WTC11 (cell line): ENCODE measurements at regions of chr17 and their contacts with region 1.

Region 1: GRCh38 chr17:81018044-81018802 is 16.7 kb upstream of the BAIAP2 start:
- DNase-seq: no peak
- ATAC-seq: no peak
- H3K4me3 Mint-ChIP-seq: no peak overlapping the region
- H3K27ac Mint-ChIP-seq: peak overlapping the region; percentile 48
- H3K4me1 Mint-ChIP-seq: peaks cover 15% of the 10 kb centered on the region
- H3K27me3 Mint-ChIP-seq: no peaks in the 10 kb centered on the region
- CTCF ChIP-seq: no peak

Region 2: DNA sequence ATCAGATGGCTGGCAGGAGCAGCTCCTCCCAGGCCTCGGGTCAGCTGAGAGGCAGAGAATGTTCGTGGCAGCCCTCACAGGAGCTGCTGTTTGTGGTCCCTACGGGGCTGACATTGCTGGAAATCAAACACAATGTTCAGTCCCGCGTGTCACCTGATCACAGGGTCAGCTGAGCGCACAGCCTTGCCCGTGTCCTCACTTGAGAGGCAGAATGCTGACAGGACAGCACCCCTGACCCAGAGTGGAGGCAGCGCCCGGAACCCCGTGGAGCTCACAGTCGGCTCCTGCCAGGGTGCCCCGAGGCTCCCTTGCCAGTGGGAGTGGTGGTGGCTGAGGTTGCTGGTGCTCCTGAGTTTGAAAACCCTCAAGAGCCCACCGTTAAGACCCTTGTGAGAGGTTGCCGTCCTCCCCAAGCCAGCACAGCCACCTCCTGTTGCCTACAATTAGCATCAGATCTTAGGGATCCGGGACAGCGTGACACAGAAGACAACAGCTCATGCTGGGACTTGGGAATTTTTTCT is 30.2 kb before region 1 on chr17:
- CTCF ChIA-PET with region 1: interaction called, 13 read pairs
- POLR2A ChIA-PET with region 1: interaction called, 4 read pairs
- DNase-seq: no peak
- ATAC-seq: no peak
- H3K4me3 Mint-ChIP-seq: no peak overlapping the region
- H3K27ac Mint-ChIP-seq: no peak overlapping the region
- H3K4me1 Mint-ChIP-seq: peaks cover 5% of the 10 kb centered on the region
- H3K27me3 Mint-ChIP-seq: peaks cover 10% of the 10 kb centered on the region
- CTCF ChIP-seq: no peak

Region 3: DNA sequence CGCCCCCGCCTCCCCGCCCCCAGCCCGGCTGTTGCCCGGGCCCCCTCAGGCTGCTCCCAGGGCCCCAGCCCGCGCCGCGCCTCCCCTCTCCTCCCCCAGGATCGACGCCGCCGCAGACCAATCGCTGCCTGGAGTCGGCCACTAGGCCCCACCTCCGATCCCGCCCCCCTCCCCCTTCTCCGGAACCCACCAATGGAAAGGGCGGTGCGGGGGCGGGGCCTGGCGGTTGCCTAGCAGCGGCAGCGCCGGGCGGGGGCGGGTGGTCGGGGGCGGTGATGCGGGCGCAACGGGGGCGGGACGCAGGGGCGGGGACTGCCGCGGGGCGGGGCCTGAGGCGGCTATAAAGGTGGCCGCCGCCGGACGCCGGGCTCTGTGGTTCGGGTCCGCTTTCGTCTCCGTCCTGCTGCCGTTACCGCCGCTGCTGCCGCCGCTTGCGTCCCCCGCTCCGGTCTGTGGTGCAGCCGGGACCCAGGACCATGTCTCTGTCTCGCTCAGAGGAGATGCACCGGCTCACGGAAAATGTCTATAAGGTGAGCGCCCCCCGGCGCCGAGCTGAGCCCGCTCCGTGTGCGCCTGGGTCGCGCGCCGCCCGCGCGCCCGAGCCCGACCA is 16.7 kb after region 1 on chr17 and contains the start of gene BAIAP2:
- CTCF ChIA-PET with region 1: interaction called, 20 read pairs
- POLR2A ChIA-PET with region 1: no interaction called
- DNase-seq: peak; percentile 98
- ATAC-seq: peak; percentile 87
- H3K4me3 Mint-ChIP-seq: peak within 1 kb of the TSS; percentile 82
- H3K27ac Mint-ChIP-seq: no peak within 1 kb of the TSS; the same call in 1 of the 2 replicates
- H3K4me1 Mint-ChIP-seq: peaks cover 23% of the 10 kb centered on the region
- H3K27me3 Mint-ChIP-seq: peaks cover 25% of the 10 kb centered on the region
- CTCF ChIP-seq: no peak
- total RNA-seq, gene BAIAP2: 16.9 to 20.7 TPM (median 18.4 TPM) in 3 replicates

Region 4: DNA sequence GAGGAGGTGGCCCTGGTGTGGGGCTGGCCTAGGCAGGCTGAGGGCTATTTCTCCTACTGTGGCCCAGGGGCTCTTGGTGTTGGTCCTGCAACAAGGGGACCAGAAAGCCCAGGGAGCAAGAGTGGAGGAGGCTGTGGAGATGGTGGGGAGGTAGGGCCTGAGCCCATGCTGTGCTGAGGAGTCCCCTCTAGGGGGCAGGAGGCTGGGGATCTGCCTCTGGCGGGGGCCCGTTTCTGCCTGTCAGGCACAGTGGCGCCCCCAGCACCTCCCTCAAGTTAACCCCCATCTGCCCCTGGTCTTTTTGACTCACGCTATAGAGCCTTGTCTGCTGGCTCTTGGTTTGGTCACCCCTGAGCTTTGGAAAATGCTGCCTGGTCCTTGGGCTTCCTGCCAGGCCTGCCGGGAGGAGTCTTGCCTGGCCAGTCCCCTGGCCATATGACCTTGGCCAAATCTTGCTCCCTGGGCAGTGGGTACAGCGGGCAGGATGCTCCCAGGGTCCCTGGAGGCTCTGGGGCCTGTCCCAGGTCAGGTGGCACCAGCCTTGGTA is 22.6 kb after region 1 on chr17:
- CTCF ChIA-PET with region 1: interaction called, 11 read pairs
- POLR2A ChIA-PET with region 1: no interaction called
- DNase-seq: peak; percentile 72
- ATAC-seq: peak; percentile 79
- H3K4me3 Mint-ChIP-seq: no peak overlapping the region
- H3K27ac Mint-ChIP-seq: peak overlapping the region; percentile 47; the same call in 1 of the 2 replicates
- H3K4me1 Mint-ChIP-seq: peaks cover 14% of the 10 kb centered on the region
- H3K27me3 Mint-ChIP-seq: peaks cover 10% of the 10 kb centered on the region
- CTCF ChIP-seq: peak; percentile 68

Region 5: GRCh38 chr17:81064678-81065475 is 46.7 kb after region 1 on chr17:
- CTCF ChIA-PET with region 1: interaction called, 11 read pairs
- POLR2A ChIA-PET with region 1: no interaction called
- DNase-seq: no peak
- ATAC-seq: peak; percentile 43
- H3K4me3 Mint-ChIP-seq: no peak overlapping the region
- H3K27ac Mint-ChIP-seq: peak overlapping the region; percentile 65; the same call in 1 of the 2 replicates
- H3K4me1 Mint-ChIP-seq: peaks cover 5% of the 10 kb centered on the region
- H3K27me3 Mint-ChIP-seq: no peaks in the 10 kb centered on the region
- CTCF ChIP-seq: no peak

Region 6: DNA sequence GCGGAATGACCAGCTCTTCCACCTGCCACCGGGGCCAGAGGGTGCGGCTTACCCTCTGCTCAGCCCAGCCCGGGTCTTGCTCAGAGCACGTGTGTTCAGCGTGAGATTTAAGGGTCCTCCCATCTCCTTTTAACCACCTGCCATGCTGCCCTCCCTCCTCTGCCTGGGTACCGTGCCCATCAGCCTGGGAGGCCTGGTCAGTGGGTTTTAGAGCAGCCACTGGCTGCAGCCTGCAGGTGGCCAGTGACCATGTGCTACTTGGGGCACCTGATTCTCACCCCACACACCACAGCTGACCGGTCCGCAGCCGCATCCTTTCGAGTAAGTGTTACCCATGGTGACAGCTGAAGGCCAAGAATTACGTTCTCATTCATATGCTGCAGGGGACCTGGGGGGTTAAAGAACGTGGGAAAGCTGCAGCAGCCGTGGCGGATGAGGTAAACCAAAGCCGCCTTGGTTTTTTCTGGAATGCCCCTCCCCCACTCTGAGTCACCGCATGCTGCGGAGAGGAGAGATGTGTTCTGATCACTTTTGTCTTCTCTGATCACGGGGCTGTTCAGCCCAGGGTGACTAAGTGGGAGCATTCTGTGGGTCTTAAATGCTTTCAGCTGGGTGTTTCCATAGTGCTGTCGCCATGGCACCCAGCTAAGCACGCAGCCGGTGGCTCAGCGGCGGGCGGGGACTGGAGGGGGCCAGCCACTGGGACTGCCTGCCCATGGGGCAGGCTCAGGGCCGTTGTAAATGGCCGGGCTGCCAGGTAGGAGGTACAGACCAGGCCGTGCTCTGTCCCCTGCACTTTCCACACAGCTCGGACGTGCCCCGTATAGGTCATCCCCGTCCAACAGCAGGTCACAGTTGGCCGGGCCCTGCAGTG is 76.5 kb after region 1 on chr17:
- CTCF ChIA-PET with region 1: interaction called, 32 read pairs
- POLR2A ChIA-PET with region 1: no interaction called
- DNase-seq: peak; percentile 75
- ATAC-seq: peak; percentile 37
- H3K4me3 Mint-ChIP-seq: no peak overlapping the region
- H3K27ac Mint-ChIP-seq: peak overlapping the region; percentile 92
- H3K4me1 Mint-ChIP-seq: peaks cover 22% of the 10 kb centered on the region
- H3K27me3 Mint-ChIP-seq: no peaks in the 10 kb centered on the region
- CTCF ChIP-seq: no peak